ENCODE measurements at regions of chr3 and their contacts with region 1.

Region 1: GRCh38 chr3:30426293-30426993 is 180.0 kb upstream of the TGFBR2 start:
- DNase-seq: peak; percentile 26 to 85
- ATAC-seq: peak; percentile 98 to 100 (median 100)
- H3K4me3 ChIP-seq: no peak overlapping the region
- H3K27ac ChIP-seq: peak overlapping the region; percentile 36 to 85 (median 76)
- H3K4me1 ChIP-seq: peaks cover 0 to 21% (median 17%) of the 10 kb centered on the region in 9 donors
- H3K27me3 ChIP-seq: no peaks in the 10 kb centered on the region
- CTCF ChIP-seq: no peak

Region 2: DNA sequence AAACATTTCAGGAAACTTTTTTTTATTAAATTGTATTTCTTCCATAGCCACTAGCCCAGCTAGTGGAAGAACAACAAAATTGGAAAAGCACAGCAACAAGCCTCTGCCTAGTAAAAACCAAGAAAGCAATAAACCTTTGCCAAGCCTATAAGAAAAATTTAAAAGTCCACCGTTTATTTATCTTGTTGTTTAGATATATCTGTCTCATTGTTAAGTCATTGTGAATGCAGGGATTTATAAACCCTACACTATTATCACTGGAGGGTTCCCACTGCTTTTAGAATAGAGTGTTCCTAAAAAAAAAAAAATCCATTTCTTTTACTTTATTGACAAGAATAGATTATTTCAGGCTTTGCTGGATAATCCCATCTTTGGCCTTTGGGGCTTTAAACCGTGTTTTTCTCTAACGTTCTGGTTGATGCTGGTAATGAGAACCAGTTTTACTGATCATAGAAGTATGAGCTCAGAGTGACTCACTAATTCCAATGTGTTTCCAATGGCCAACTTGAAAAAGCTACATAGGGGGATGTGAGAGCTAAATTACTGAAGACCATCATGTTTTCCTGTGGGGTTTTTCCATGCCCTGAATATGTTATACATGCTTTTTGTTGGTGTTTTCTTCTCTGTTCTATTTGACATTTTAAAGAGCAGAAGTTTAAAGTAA is 511.4 kb before region 1 on chr3:
- intact Hi-C with region 1: no loop called
- DNase-seq: no peak
- ATAC-seq: peak in 2 of 8 donors; percentile 34 to 44
- H3K4me3 ChIP-seq: no peak overlapping the region
- H3K27ac ChIP-seq: peak overlapping the region in 1 of 10 donors; percentile 10
- H3K4me1 ChIP-seq: no peaks in the 10 kb centered on the region
- H3K27me3 ChIP-seq: no peaks in the 10 kb centered on the region
- CTCF ChIP-seq: no peak

Region 3: DNA sequence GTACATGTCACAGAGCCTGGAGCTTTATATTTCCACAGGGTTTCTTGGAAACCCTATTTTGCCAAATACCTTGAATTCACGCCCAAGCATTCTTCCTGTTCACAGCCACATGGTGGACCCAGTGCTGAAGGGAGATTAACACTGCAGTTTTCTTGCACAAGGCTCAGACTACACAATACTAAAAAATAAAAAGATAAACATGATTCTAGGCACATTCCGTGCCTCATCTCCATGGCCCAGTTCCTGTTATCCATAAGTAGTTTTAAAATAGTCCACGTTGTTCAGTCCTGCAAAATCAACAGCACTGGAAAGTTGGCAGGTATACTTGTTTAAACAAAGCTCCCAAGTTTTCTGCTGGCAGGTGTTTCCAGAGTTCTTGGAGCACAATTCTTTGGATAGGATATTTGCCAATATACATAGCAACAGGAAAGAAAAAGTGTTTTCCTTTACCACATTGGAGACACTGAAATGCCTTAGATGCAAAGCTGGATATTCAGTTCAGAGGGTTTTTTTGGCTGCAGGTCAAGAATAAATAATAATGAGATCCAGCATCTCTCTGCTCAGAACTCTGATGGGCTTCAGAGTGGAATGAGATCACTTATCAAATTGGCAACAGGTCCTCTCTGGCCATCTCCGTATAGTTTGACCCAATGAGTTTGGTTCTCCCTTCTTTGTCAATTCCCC is 91.9 kb after region 1 on chr3:
- intact Hi-C with region 1: loop called in 1 of 10 experiments (anchors 5 kb)
- DNase-seq: peak in 1 of 2 donors; percentile 56
- ATAC-seq: peak; percentile 72 to 96 (median 90)
- H3K4me3 ChIP-seq: no peak overlapping the region
- H3K27ac ChIP-seq: peak overlapping the region; percentile 19 to 81 (median 68)
- H3K4me1 ChIP-seq: peaks cover 0 to 54% (median 37%) of the 10 kb centered on the region in 9 donors
- H3K27me3 ChIP-seq: no peaks in the 10 kb centered on the region
- CTCF ChIP-seq: peak in 6 of 9 donors; percentile 9 to 48 (median 21)

Region 4: GRCh38 chr3:30945291-30945690 is 518.8 kb after region 1 on chr3:
- intact Hi-C with region 1: no loop called
- DNase-seq: no peak
- ATAC-seq: no peak
- H3K4me3 ChIP-seq: no peak overlapping the region
- H3K27ac ChIP-seq: no peak overlapping the region
- H3K4me1 ChIP-seq: no peaks in the 10 kb centered on the region
- H3K27me3 ChIP-seq: no peaks in the 10 kb centered on the region
- CTCF ChIP-seq: no peak

Measured in heart right ventricle (tissue), 16 donors.